ENCODE measurements at regions of chr18 and their contacts with region 1.

Region 1: DNA sequence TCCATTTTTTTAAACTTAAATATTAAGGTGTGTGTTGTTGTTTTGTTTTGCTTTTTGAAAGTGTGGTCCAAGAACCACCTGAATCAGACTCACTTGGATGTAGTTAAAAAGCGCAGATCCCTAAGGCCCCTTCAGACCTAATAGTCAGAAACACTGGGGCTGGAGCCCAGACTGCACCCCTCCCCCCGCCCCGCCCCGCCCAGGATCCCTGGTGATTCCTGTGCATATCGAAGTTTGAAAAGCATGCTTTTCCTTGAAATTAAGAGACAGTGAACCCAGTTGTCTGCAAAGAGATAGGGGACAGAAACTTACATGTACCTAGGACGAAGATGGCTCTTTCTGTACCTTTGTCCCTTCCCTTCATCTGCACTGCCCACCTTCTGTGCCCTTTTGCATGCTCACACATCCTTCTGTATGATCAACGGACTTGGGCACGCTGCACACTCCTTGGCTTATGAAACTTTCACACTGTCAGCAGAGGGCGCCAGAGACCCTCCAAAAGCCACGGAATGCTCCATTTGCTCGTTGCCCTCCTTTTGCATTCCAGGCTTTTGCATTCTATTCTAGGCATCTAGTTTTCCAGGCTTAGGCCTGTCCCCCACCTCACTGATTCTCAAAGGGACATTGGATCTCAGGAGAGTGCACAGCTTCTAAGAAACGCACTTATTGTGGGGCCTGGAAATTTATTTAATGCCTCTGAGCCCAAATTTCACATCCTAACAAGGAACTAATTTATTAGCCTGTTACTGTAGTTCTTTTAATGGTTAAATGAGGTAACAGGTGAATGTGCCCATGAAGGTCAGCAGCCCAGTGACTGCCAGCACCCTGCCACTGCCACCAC is 32.8 kb upstream of the SLC14A1 start:
- DNase-seq: peak; percentile 38 to 87 (median 69)
- ATAC-seq: no peak
- H3K4me3 ChIP-seq: no peak overlapping the region
- H3K4me3 Mint-ChIP-seq: peak overlapping the region in 1 of 3 donors; percentile 20
- H3K27ac ChIP-seq: no peak overlapping the region
- H3K27ac Mint-ChIP-seq: no peak overlapping the region
- H3K4me1 ChIP-seq: peaks cover 28 to 46% of the 10 kb centered on the region in 2 experiments
- H3K4me1 Mint-ChIP-seq: peaks cover 36 to 49% (median 49%) of the 10 kb centered on the region in 3 donors
- H3K27me3 ChIP-seq: peaks cover 0 to 3% of the 10 kb centered on the region in 2 experiments
- H3K27me3 Mint-ChIP-seq: no peaks in the 10 kb centered on the region

Region 2: GRCh38 chr18:45505497-45506206 is 185.5 kb before region 1 on chr18:
- CTCF ChIA-PET with region 1: no interaction called
- POLR2A ChIA-PET with region 1: no interaction called
- DNase-seq: no peak
- ATAC-seq: no peak
- H3K4me3 ChIP-seq: no peak overlapping the region
- H3K4me3 Mint-ChIP-seq: no peak overlapping the region
- H3K27ac ChIP-seq: no peak overlapping the region
- H3K27ac Mint-ChIP-seq: no peak overlapping the region
- H3K4me1 ChIP-seq: no peaks in the 10 kb centered on the region
- H3K4me1 Mint-ChIP-seq: no peaks in the 10 kb centered on the region
- H3K27me3 ChIP-seq: peaks cover 0 to 3% of the 10 kb centered on the region in 2 experiments
- H3K27me3 Mint-ChIP-seq: peaks cover 3 to 4% of the 10 kb centered on the region in 2 donors

Region 3: GRCh38 chr18:45657357-45658335 is 33.5 kb before region 1 on chr18:
- CTCF ChIA-PET with region 1: interaction called, 6 to 29 read pairs
- POLR2A ChIA-PET with region 1: interaction called in 1 of 2 experiments, 11 read pairs
- DNase-seq: peak in 25 of 35 experiments; percentile 5 to 44 (median 20)
- ATAC-seq: peak; percentile 66 to 97 (median 87)
- H3K4me3 ChIP-seq: no peak overlapping the region
- H3K4me3 Mint-ChIP-seq: peak overlapping the region; percentile 0 to 66 (median 3)
- H3K27ac ChIP-seq: peak overlapping the region; percentile 1
- H3K27ac Mint-ChIP-seq: peak overlapping the region; percentile 60
- H3K4me1 ChIP-seq: peaks cover 8 to 21% of the 10 kb centered on the region in 2 experiments
- H3K4me1 Mint-ChIP-seq: peaks cover 24 to 35% (median 28%) of the 10 kb centered on the region in 3 donors
- H3K27me3 ChIP-seq: no peaks in the 10 kb centered on the region
- H3K27me3 Mint-ChIP-seq: no peaks in the 10 kb centered on the region

Region 4: DNA sequence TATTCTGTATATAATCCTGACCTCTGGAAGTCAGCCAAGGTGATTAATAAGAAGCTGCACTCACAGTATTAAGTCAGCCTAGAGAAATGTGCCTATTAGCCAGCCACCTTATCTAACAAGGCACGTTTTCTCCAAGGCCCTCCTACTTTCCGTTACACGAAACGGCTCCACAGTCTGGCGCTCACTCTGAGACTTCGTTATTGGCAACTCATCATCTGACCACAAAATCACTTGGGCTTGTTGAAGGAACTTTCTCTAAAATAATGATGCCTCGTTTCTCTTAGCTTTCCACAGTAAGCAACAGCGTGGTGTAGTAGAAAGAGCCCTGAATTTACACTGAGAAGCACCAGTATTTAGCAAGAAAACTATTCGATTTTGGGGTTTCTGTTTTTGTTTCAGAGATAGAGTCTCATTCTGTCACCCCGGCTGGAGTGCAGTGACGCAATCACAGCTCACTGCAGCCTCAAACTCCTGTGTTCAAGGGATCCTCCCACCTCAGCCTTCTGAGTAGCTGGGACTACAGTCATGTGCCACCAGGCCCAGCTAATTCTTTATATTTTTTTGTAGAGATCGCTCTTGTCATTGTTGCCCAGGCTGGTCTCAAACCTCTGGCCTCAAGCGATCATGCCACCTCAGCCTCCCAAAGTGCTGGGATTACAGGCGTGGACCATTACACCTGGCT is 20.8 kb before region 1 on chr18:
- CTCF ChIA-PET with region 1: interaction called, 29 to 62 read pairs
- POLR2A ChIA-PET with region 1: interaction called in 1 of 2 experiments, 4 read pairs
- DNase-seq: peak in 30 of 35 experiments; percentile 16 to 66 (median 40)
- ATAC-seq: peak; percentile 45 to 80 (median 64)
- H3K4me3 ChIP-seq: no peak overlapping the region
- H3K4me3 Mint-ChIP-seq: peak overlapping the region in 2 of 3 donors; percentile 48 to 50
- H3K27ac ChIP-seq: peak overlapping the region; percentile 69
- H3K27ac Mint-ChIP-seq: peak overlapping the region; percentile 37 to 65
- H3K4me1 ChIP-seq: peaks cover 38 to 45% of the 10 kb centered on the region in 2 experiments
- H3K4me1 Mint-ChIP-seq: peaks cover 57 to 61% (median 58%) of the 10 kb centered on the region in 3 donors
- H3K27me3 ChIP-seq: no peaks in the 10 kb centered on the region
- H3K27me3 Mint-ChIP-seq: no peaks in the 10 kb centered on the region

Region 5: DNA sequence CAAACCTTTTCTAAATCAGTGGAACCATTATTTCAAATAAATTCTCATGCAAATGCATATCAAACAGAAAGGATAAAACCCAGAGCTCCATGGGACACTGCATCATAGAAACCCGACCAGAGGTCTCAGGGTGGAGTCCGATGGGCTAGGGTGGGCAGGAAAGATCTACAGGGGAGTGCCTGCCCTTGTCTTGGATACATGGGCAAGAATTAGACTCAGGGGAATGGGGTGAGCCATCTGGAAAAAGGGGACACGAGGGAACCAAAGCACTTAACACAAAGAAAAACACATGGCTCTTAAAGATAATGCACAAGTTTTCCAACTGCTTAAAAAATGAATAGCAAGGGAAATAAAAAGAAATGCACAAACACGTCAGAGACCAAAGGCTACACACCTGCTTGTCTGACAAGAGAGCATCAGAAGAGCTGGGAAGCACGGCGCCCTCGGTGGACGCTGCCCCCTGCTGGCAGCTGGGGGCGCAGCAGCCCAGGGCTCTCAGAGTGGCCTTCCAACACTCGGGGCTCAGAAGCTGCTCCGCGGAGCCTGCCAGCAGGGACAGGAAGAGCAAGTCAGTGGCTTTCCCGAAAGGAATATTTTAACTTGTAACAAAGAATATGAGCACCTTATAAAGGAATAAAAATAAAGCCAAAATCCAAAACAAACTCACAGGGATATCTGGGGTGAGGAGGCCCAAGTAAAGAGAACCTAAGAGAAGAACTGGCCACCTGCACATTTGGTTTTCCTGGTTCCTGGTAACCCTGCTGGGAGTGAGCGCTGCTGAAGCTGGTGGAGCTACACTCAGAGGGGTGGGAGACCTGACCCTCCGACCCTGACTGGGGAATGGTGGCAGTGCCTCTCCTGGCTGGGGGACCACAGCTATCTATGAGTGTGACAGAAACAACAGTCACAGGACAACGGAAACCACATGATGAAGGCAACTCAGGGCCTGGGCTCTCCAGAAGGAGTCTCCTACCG is 188.8 kb after region 1 on chr18:
- CTCF ChIA-PET with region 1: interaction called, 18 to 52 read pairs
- POLR2A ChIA-PET with region 1: no interaction called
- DNase-seq: peak; percentile 26 to 81 (median 64)
- ATAC-seq: peak; percentile 92 to 96 (median 94)
- H3K4me3 ChIP-seq: no peak overlapping the region
- H3K4me3 Mint-ChIP-seq: no peak overlapping the region
- H3K27ac ChIP-seq: no peak overlapping the region
- H3K27ac Mint-ChIP-seq: peak overlapping the region in 1 of 2 donors; percentile 34
- H3K4me1 ChIP-seq: peaks cover 5 to 10% of the 10 kb centered on the region in 2 experiments
- H3K4me1 Mint-ChIP-seq: peaks cover 14 to 17% (median 16%) of the 10 kb centered on the region in 3 donors
- H3K27me3 ChIP-seq: no peaks in the 10 kb centered on the region
- H3K27me3 Mint-ChIP-seq: no peaks in the 10 kb centered on the region

Region 6: GRCh38 chr18:47427923-47428637 is 1736.9 kb after region 1 on chr18:
- CTCF ChIA-PET with region 1: no interaction called
- POLR2A ChIA-PET with region 1: no interaction called
- DNase-seq: no peak
- ATAC-seq: no peak
- H3K4me3 ChIP-seq: no peak overlapping the region
- H3K4me3 Mint-ChIP-seq: no peak overlapping the region
- H3K27ac ChIP-seq: no peak overlapping the region
- H3K27ac Mint-ChIP-seq: no peak overlapping the region
- H3K4me1 ChIP-seq: no peaks in the 10 kb centered on the region
- H3K4me1 Mint-ChIP-seq: no peaks in the 10 kb centered on the region
- H3K27me3 ChIP-seq: no peaks in the 10 kb centered on the region
- H3K27me3 Mint-ChIP-seq: peaks cover 0 to 4% of the 10 kb centered on the region in 2 donors

Measured in T-cell (primary cell).